HepG2 (cell line): ENCODE measurements at regions of chr2 and their contacts with region 1.

Region 1: GRCh38 chr2:179440642-179441251 is 176.1 kb upstream of the SESTD1 start:
- DNase-seq: peak; percentile 34
- ATAC-seq: peak; percentile 61; the same call in 2 of the 3 replicates
- H3K4me3 ChIP-seq: no peak overlapping the region
- H3K27ac ChIP-seq: no peak overlapping the region
- H3K4me1 ChIP-seq: no peaks in the 10 kb centered on the region
- H3K27me3 ChIP-seq: no peaks in the 10 kb centered on the region
- CTCF ChIP-seq: peak; percentile 51
- EP300 ChIP-seq: no peak
- POLR2A ChIP-seq: no peak
- RAD21 ChIP-seq: 0 out of 2 replicates have a peak, but pooled peaks have one; percentile 46

Region 2: DNA sequence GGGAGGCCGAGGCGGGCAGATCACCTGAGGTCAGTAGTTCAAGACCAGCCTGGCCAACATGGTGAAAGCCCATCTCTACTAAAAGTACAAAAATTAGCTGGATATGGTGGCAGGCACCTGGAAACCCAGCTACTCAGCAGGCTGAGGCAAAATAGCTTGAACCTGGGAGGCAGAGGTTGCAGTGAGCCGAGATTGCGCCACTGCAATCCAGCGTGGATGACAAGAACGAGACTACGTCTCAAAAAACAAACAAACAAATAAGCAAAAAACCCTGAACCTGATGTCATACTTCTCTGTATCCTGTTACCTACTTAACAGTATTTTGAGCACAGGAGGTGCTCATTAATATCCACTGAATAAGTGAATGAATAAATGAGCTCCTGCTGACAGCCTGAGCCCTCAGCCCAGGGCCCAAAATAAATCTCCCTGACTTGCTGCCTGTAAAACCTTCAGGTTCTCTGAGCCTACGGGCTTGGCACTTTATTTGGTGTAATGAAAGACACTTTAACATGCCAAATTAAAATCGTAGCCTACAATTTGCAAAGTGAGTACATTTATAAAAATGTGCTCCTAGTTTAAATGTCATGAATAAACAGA is 205.5 kb after region 1 on chr2:
- CTCF ChIA-PET with region 1: no interaction called
- POLR2A ChIA-PET with region 1: no interaction called
- in situ Hi-C with region 1: no loop called
- intact Hi-C with region 1: loop called (anchors 10 kb)
- DNase-seq: no peak
- ATAC-seq: no peak
- H3K4me3 ChIP-seq: no peak overlapping the region
- H3K27ac ChIP-seq: no peak overlapping the region
- H3K4me1 ChIP-seq: peaks cover 7% of the 10 kb centered on the region; the same call in 1 of the 2 replicates
- H3K27me3 ChIP-seq: no peaks in the 10 kb centered on the region
- CTCF ChIP-seq: no peak
- EP300 ChIP-seq: no peak
- POLR2A ChIP-seq: no peak
- RAD21 ChIP-seq: no peak